Sigmoid colon (tissue), 7 donors: ENCODE measurements at regions of chr5 and their contacts with region 1.

Region 1: GRCh38 chr5:37319037-37319782 is 51.7 kb downstream of the NUP155 start:
- DNase-seq: no peak
- H3K4me3 ChIP-seq: no peak overlapping the region
- H3K27ac ChIP-seq: no peak overlapping the region
- H3K4me1 ChIP-seq: no peaks in the 10 kb centered on the region
- H3K27me3 ChIP-seq: no peaks in the 10 kb centered on the region
- CTCF ChIP-seq: no peak
- EP300 ChIP-seq: no peak
- POLR2A ChIP-seq: no peak

Region 2: DNA sequence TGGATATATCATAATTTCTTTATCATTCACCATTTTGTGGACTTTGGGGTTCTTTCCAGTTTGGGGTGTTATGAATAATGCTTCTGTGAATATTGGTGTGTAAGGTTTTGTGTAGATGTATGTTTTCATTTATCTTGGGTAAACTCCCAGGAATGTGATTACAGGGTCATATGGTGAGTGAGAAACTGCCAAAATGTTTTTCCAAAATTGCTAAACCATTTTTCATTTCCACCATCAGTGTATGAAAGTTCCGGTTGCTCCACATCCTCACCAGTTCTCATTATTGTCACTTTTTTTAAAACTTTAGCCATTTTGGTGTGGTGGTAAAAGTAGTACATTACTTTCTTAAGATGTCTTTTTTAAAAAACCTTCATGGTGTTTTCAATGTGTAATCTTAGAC is 289.8 kb before region 1 on chr5:
- intact Hi-C with region 1: loop called (anchors 10 kb)
- DNase-seq: no peak
- H3K4me3 ChIP-seq: no peak overlapping the region
- H3K27ac ChIP-seq: no peak overlapping the region
- H3K4me1 ChIP-seq: no peaks in the 10 kb centered on the region
- H3K27me3 ChIP-seq: no peaks in the 10 kb centered on the region
- CTCF ChIP-seq: no peak
- EP300 ChIP-seq: no peak
- POLR2A ChIP-seq: no peak

Region 3: GRCh38 chr5:37054391-37054790 is 264.8 kb before region 1 on chr5:
- intact Hi-C with region 1: loop called (anchors 10 kb)
- DNase-seq: no peak
- H3K4me3 ChIP-seq: no peak overlapping the region
- H3K27ac ChIP-seq: no peak overlapping the region
- H3K4me1 ChIP-seq: no peaks in the 10 kb centered on the region
- H3K27me3 ChIP-seq: no peaks in the 10 kb centered on the region
- CTCF ChIP-seq: no peak
- EP300 ChIP-seq: no peak
- POLR2A ChIP-seq: no peak

Region 4: GRCh38 chr5:37214550-37214949 is 104.7 kb before region 1 on chr5:
- intact Hi-C with region 1: loop called (anchors 10 kb)
- DNase-seq: no peak
- H3K4me3 ChIP-seq: no peak overlapping the region
- H3K27ac ChIP-seq: no peak overlapping the region
- H3K4me1 ChIP-seq: no peaks in the 10 kb centered on the region
- H3K27me3 ChIP-seq: no peaks in the 10 kb centered on the region
- CTCF ChIP-seq: no peak
- EP300 ChIP-seq: no peak
- POLR2A ChIP-seq: no peak